ENCODE measurements at regions of chr11 and their contacts with region 1.

Region 1: DNA sequence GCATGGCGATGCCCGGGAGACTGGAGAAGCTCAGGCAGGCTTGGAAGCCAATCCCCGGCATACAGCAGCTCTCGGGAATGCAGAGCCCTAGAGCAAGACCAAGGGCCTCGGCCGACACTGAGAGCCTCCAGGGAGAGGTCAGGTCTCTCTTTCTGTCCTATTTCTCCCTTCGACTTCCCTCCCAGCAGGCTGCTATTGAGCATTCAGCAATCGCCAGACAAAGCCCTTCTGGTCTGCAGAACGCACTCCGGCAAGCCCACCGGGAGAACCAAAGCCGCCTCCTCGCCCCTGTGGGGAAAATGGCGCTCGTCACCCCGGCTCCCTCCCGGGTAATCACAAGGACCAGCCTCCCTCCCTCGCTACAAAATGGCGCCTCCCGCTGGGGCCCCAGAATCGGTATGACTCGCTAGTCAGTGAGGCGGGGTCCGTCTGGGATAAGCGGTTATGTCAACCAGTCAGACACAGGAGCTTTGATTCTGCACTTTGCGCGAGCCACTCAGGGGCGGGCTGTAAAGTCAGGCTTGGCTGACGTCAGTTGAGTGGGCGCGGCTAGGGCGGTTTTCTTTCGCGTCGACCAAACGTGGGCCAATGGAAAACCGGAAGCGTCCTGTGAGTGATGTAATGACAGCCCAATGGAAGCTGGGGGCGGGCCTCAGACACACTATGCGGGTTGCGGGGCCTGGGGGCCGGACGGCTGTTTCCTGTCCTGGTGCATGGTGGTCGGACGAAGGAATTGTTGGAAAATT is at the start of gene ZNF143:
- DNase-seq: peak; percentile 100
- H3K4me3 Mint-ChIP-seq: peak within 1 kb of the TSS; percentile 93
- H3K27ac Mint-ChIP-seq: peak within 1 kb of the TSS; percentile 97
- H3K4me1 Mint-ChIP-seq: peaks cover 18% of the 10 kb centered on the region
- H3K27me3 Mint-ChIP-seq: no peaks in the 10 kb centered on the region
- total RNA-seq, gene ZNF143: 30.9 and 36.8 TPM in 2 replicates

Region 2: GRCh38 chr11:8682303-8683114 is 778.0 kb before region 1 on chr11 and contains the starts of genes RPL27A and TRIM66:
- intact Hi-C with region 1: loop called (anchors 1 kb)
- DNase-seq: peak; percentile 98
- H3K4me3 Mint-ChIP-seq: peak within 1 kb of the TSS; percentile 96
- H3K27ac Mint-ChIP-seq: peak within 1 kb of the TSS; percentile 92
- H3K4me1 Mint-ChIP-seq: peaks cover 36% of the 10 kb centered on the region
- H3K27me3 Mint-ChIP-seq: no peaks in the 10 kb centered on the region
- total RNA-seq, gene RPL27A: 749 and 766 TPM in 2 replicates
- total RNA-seq, gene TRIM66: 13.6 and 14.6 TPM in 2 replicates

Region 3: GRCh38 chr11:9003573-9004309 is 456.8 kb before region 1 on chr11 and contains the start of gene NRIP3:
- intact Hi-C with region 1: loop called (anchors 5 kb)
- DNase-seq: peak; percentile 71
- H3K4me3 Mint-ChIP-seq: peak within 1 kb of the TSS; percentile 75
- H3K27ac Mint-ChIP-seq: peak within 1 kb of the TSS; percentile 23
- H3K4me1 Mint-ChIP-seq: peaks cover 29% of the 10 kb centered on the region
- H3K27me3 Mint-ChIP-seq: peaks cover 51% of the 10 kb centered on the region
- total RNA-seq, gene NRIP3: 5.0 and 5.5 TPM in 2 replicates

Region 4: DNA sequence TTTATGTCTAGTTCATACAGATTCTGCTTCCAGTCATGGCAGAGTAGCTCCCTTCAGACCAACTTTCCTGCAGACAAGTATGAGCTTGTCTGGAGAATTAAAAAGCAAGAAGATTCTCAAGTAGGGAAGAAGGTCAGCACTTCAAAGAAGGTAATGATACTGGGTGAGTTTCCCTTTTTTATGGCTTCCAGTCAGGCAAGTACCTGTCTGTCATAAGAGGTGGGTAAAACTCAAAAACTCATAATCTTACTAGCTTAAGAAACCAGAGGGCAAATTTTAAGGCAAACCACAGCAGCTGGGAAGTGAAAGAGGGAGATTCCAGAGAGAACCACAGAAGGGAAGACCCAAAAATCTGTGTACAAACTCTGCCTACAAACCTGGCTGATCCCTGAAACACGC is 249.6 kb before region 1 on chr11:
- intact Hi-C with region 1: loop called (anchors 2 kb)
- DNase-seq: no peak
- H3K4me3 Mint-ChIP-seq: no peak overlapping the region
- H3K27ac Mint-ChIP-seq: peak overlapping the region; percentile 80
- H3K4me1 Mint-ChIP-seq: peaks cover 75% of the 10 kb centered on the region
- H3K27me3 Mint-ChIP-seq: no peaks in the 10 kb centered on the region

Region 5: GRCh38 chr11:9314291-9315036 is 146.0 kb before region 1 on chr11 and contains the start of gene TMEM41B:
- intact Hi-C with region 1: loop called (anchors 1 kb)
- DNase-seq: peak; percentile 99
- H3K4me3 Mint-ChIP-seq: peak within 1 kb of the TSS; percentile 96
- H3K27ac Mint-ChIP-seq: peak within 1 kb of the TSS; percentile 97
- H3K4me1 Mint-ChIP-seq: peaks cover 27% of the 10 kb centered on the region
- H3K27me3 Mint-ChIP-seq: peaks cover 20% of the 10 kb centered on the region
- total RNA-seq, gene TMEM41B: 29.8 and 31.9 TPM in 2 replicates

Region 6: GRCh38 chr11:9384535-9385303 is 75.8 kb before region 1 on chr11 and contains the start of gene IPO7:
- intact Hi-C with region 1: loop called (anchors 1 kb)
- DNase-seq: peak; percentile 87
- H3K4me3 Mint-ChIP-seq: peak within 1 kb of the TSS; percentile 93
- H3K27ac Mint-ChIP-seq: peak within 1 kb of the TSS; percentile 92
- H3K4me1 Mint-ChIP-seq: peaks cover 21% of the 10 kb centered on the region
- H3K27me3 Mint-ChIP-seq: no peaks in the 10 kb centered on the region
- total RNA-seq, gene IPO7: 143 and 155 TPM in 2 replicates

Region 7: GRCh38 chr11:9448576-9449352 is 11.7 kb before region 1 on chr11:
- intact Hi-C with region 1: no loop called
- DNase-seq: no peak
- H3K4me3 Mint-ChIP-seq: no peak overlapping the region
- H3K27ac Mint-ChIP-seq: no peak overlapping the region
- H3K4me1 Mint-ChIP-seq: peaks cover 17% of the 10 kb centered on the region
- H3K27me3 Mint-ChIP-seq: no peaks in the 10 kb centered on the region

Region 8: DNA sequence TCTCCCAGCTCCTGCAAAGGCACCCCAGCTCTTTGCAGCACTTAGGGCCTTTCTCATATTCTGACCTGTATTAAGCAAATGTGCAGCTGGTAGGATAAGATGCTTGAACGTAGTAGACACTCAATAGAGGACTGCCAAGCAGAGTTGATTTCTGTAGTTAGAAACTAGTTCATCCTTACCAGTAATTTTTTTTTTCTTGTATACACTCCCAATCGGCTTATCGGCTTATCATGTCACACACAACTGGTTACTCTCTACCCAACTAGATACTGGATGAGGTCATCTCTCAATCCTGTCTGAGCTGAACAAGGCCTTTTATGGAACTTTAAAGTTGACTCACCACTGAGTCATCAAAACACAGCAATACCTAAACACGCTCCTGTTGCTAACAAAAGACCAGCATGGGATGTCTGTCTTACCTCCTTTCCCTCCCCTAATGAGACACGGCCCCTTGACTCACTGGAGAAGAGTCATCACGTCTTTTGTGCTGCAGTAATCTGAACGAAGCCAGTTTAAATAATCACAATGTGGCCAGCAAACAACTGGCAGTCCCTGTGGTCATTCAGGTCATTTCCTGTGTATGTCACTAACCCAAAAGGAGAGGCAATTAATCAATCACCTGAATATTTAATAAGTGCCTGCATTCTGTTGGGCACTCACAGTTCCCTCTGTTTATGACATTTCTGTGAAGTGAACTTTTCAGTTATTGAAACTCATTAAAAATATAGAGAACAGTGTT is 105.5 kb after region 1 on chr11:
- intact Hi-C with region 1: loop called (anchors 2 kb)
- DNase-seq: peak; percentile 61
- H3K4me3 Mint-ChIP-seq: peak overlapping the region; percentile 37
- H3K27ac Mint-ChIP-seq: peak overlapping the region; percentile 89
- H3K4me1 Mint-ChIP-seq: peaks cover 26% of the 10 kb centered on the region
- H3K27me3 Mint-ChIP-seq: peaks cover 2% of the 10 kb centered on the region

Measured in activated T-helper 2 cell treated with anti-CD3 and anti-CD28 coated beads, Interferon-gamma antibody, Interleukin-2, Interleukin-4, amounts not matched to agents 10 μg/mL and 5 μg/mL and 100 μg/mL, durations not matched to agents 14 hours and 24 hours and 36 hours (primary cell).